PC-9 (cell line): ENCODE measurements at regions of chrX and their contacts with region 1.

Region 1: DNA sequence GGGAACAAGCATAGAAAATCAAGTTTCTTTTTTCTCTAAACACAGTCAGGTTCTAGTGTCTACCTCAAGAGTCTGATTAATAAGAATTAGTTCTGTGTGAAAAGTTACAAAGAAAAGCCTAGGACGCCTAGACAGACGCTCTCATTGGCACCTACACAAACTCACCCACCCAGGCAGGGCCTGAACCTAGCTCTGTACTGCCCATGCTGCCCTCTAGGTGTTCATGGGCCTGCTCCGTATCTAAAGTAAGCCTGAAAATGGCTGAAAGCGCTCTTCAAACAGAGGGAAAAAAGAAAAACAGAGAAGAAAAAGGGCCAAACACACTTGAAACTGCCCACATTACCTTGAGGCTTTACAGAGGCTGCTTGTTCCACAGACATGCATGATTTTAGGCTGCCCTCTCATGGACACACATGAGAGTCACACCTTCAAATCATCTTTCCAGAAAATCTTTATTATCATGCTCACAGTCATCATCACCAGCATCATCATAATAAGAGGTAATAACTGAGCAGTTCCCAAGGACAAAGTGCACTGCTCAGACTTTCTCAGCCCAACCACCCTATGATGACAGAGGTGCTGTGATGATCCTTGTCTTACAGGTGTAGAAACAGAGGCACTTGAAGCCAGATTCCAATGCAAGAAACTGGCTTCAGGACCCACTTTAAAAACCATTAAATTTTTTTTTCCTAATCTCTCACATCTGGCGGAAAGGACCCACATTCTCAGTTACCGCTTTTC is 49.6 kb downstream of the MAP7D2 start:
- DNase-seq: peak; percentile 21 to 55
- H3K4me3 ChIP-seq: peak overlapping the region; percentile 29; the same call in 1 of the 2 replicates
- H3K27ac ChIP-seq: peak overlapping the region; percentile 49
- H3K4me1 ChIP-seq: peaks cover 22% of the 10 kb centered on the region
- H3K27me3 ChIP-seq: no peaks in the 10 kb centered on the region
- CTCF ChIP-seq: peak; percentile 76

Region 2: GRCh38 chrX:19544693-19545305 is 522.3 kb before region 1 on chrX:
- CTCF ChIA-PET with region 1: no interaction called
- POLR2A ChIA-PET with region 1: no interaction called
- intact Hi-C with region 1: loop called (anchors 5 kb)
- DNase-seq: peak; percentile 26 to 43
- H3K4me3 ChIP-seq: no peak overlapping the region
- H3K27ac ChIP-seq: no peak overlapping the region
- H3K4me1 ChIP-seq: no peaks in the 10 kb centered on the region
- H3K27me3 ChIP-seq: no peaks in the 10 kb centered on the region
- CTCF ChIP-seq: peak; percentile 78

Region 3: GRCh38 chrX:19593690-19594089 is 473.4 kb before region 1 on chrX:
- CTCF ChIA-PET with region 1: no interaction called
- POLR2A ChIA-PET with region 1: no interaction called
- intact Hi-C with region 1: loop called (anchors 1 kb)
- DNase-seq: peak in 1 of 2 experiments; percentile 11
- H3K4me3 ChIP-seq: no peak overlapping the region
- H3K27ac ChIP-seq: peak overlapping the region; percentile 39; the same call in 1 of the 2 replicates
- H3K4me1 ChIP-seq: no peaks in the 10 kb centered on the region
- H3K27me3 ChIP-seq: no peaks in the 10 kb centered on the region
- CTCF ChIP-seq: peak; percentile 71

Region 4: GRCh38 chrX:19739683-19740082 is 327.5 kb before region 1 on chrX:
- CTCF ChIA-PET with region 1: no interaction called
- POLR2A ChIA-PET with region 1: no interaction called
- intact Hi-C with region 1: loop called (anchors 5 kb)
- DNase-seq: peak in 1 of 2 experiments; percentile 61
- H3K4me3 ChIP-seq: no peak overlapping the region
- H3K27ac ChIP-seq: no peak overlapping the region
- H3K4me1 ChIP-seq: peaks cover 9% of the 10 kb centered on the region; the same call in 1 of the 2 replicates
- H3K27me3 ChIP-seq: no peaks in the 10 kb centered on the region
- CTCF ChIP-seq: peak; percentile 75

Region 5: DNA sequence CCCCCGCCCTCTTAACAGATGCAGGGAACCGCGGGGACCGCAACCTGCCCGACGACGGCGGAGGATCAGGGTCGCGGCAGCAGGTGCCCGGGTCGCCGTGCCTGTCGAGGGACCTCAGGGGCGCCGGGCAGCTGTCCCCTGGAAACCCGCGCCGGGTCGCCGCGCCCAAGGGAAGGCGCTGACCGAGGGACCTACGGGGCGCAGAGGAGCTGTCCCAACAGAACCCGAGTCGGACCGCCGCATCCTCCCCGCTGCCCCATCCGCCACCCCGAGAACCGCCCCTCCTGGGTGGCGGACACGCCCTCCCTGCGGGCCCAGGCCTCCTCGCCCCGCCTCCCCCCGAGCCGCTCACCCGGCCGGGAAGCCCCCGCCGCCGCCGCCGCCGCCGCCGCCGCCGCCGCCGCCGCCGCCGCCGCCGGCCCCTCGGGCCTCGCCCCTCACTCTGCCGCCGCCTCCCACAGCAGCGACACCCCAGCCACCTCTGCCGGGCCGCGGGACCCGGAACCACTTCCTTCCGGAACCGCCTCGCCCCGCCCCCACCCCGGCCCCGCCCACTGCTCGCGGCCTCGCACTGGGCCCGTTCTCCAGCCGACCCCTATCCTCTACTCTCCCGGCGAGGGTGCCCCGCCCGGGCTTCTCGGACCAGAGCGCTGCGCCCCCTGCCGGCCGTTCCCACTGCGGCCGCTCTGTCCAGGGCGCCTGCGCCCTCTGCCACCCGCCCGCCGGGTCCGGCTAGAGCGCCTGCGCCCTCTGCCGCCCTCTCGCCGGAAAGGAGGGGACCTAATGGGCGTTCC is 76.4 kb before region 1 on chrX and contains the start of gene BCLAF3:
- CTCF ChIA-PET with region 1: no interaction called
- POLR2A ChIA-PET with region 1: interaction called, 5 read pairs
- intact Hi-C with region 1: loop called (anchors 2 kb)
- DNase-seq: peak; percentile 73 to 93
- H3K4me3 ChIP-seq: peak within 1 kb of the TSS; percentile 80
- H3K27ac ChIP-seq: 0 out of 2 replicates have a peak within 1 kb of the TSS, but pooled peaks have one; percentile 21
- H3K4me1 ChIP-seq: peaks cover 6% of the 10 kb centered on the region; the same call in 1 of the 2 replicates
- H3K27me3 ChIP-seq: no peaks in the 10 kb centered on the region
- CTCF ChIP-seq: peak; percentile 78
- total RNA-seq, gene BCLAF3: 6.7 and 7.9 TPM in 2 replicates